Activated naive CD4-positive, alpha-beta T cell treated with anti-CD3 and anti-CD28 coated beads, Interleukin-2, amount 10 ng/mL, durations not matched to agents 7 days and 5 days (primary cell): ENCODE measurements at regions of chr15 and their contacts with region 1.

Region 1: GRCh38 chr15:63504247-63504978 is at the start of gene USP3:
- DNase-seq: peak; percentile 93
- H3K4me3 Mint-ChIP-seq: peak within 1 kb of the TSS; percentile 91
- H3K27ac Mint-ChIP-seq: peak within 1 kb of the TSS; percentile 99
- H3K4me1 Mint-ChIP-seq: peaks cover 76% of the 10 kb centered on the region
- H3K27me3 Mint-ChIP-seq: no peaks in the 10 kb centered on the region

Region 2: DNA sequence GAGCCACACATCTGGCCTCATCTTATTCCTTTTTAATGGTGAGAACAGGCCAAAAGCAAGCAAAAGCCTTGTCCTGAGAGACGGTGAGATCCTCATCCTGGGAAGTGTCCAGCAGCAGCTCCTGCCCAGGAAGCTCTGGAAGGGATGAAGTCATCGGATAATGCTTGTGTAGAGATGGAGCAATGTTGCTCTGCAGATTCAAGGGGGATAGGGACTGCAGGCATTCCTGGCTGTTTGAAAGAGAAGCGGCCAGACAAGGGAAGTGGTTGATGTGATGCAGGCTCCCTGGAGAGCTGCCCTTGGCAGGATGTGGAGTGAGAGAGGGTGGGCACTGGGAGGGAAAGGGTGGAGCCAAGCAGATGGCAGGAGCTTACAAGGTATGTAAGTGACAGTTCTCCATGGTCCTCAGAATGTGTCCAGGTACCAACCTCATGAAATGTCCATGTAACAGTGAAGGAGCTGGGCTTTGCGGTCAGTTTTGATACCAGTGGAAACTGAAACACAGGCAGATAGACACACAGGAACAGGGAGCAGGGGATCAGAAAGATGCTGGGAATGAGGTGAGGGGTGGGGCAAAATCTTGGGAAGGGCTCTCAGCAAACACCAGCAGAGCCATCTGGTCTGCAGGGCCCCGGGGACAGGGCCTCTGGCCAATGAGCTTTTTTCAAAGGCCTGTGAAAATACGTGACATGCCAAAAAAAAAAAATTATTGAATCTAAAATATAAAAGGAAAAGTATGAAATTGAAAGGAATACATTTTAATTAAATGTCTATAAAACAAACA is 415.0 kb before region 1 on chr15:
- CTCF ChIA-PET with region 1: no interaction called
- DNase-seq: no peak
- H3K4me3 Mint-ChIP-seq: no peak overlapping the region
- H3K27ac Mint-ChIP-seq: no peak overlapping the region
- H3K4me1 Mint-ChIP-seq: no peaks in the 10 kb centered on the region
- H3K27me3 Mint-ChIP-seq: peaks cover 27% of the 10 kb centered on the region

Region 3: GRCh38 chr15:63481105-63481810 is 23.2 kb before region 1 on chr15:
- CTCF ChIA-PET with region 1: interaction called, 55 read pairs
- DNase-seq: no peak
- H3K4me3 Mint-ChIP-seq: no peak overlapping the region
- H3K27ac Mint-ChIP-seq: peak overlapping the region; percentile 98
- H3K4me1 Mint-ChIP-seq: peaks cover 82% of the 10 kb centered on the region
- H3K27me3 Mint-ChIP-seq: no peaks in the 10 kb centered on the region

Region 4: GRCh38 chr15:63600616-63601025 is 96.2 kb after region 1 on chr15:
- CTCF ChIA-PET with region 1: interaction called, 21 read pairs
- DNase-seq: peak; percentile 92
- H3K4me3 Mint-ChIP-seq: peak overlapping the region; percentile 91
- H3K27ac Mint-ChIP-seq: peak overlapping the region; percentile 97
- H3K4me1 Mint-ChIP-seq: peaks cover 61% of the 10 kb centered on the region
- H3K27me3 Mint-ChIP-seq: peaks cover 11% of the 10 kb centered on the region